Common myeloid progenitor, CD34-positive (primary cell): ENCODE measurements at regions of chr16 and their contacts with region 1.

Region 1: GRCh38 chr16:17177242-17177958 is 293.4 kb downstream of the XYLT1 start:
- DNase-seq: no peak
- H3K4me3 ChIP-seq: no peak overlapping the region
- H3K27ac ChIP-seq: no peak overlapping the region
- H3K4me1 ChIP-seq: peaks cover 4 to 19% (median 5%) of the 10 kb centered on the region in 4 experiments
- H3K27me3 ChIP-seq: no peaks in the 10 kb centered on the region

Region 2: DNA sequence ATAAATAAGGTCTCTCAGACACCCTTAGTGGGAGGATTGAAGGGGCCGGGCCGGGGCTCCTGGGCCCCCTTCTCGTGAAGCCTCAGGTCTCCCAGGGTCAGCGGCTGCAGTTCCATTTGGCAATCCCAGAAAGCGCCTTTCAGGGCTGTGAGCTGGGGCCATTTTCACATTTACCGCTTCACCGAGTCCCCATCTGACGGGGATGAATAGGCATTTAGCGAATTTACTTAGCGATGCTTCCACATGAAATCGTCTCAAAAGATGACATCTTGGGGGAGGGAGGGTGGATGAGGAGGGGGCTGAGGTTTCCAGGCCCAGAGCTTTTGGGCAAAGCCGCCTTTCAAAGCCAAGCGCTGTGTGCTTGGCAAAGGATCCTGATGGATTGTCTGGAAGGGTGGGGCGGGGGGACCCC is 16.4 kb before region 1 on chr16:
- CTCF ChIA-PET with region 1: no interaction called
- POLR2A ChIA-PET with region 1: no interaction called
- DNase-seq: no peak
- H3K4me3 ChIP-seq: no peak overlapping the region
- H3K27ac ChIP-seq: no peak overlapping the region
- H3K4me1 ChIP-seq: peaks cover 0 to 17% (median 2%) of the 10 kb centered on the region in 4 experiments
- H3K27me3 ChIP-seq: no peaks in the 10 kb centered on the region

Region 3: DNA sequence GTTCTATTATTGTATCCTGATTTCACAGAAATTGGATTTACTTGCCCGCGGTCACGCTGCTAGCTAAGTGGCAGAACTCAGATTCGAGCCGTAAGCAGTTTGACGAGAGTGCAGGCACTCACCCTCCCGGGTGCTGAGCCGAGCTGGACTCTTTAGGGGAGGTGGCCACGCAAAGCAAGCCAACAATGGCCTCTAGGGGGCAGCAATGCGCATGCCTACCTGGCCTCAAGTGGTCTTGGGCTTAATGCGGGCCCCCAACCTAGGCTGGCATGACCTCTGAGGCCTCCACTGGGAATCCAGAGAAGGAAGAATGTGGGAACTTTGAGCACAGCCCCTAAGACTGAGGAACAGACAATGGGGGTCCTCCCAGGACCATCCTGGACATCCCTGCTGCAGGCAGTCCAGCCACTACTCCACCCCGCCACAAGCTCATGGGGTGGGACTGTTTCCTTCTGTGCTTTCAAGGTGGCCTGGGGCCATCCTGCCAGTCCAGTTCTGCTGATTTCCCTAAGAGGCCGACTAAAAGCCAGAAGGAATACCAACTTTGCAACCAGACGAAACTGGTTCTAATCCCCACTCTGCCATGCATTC is 16.9 kb after region 1 on chr16:
- CTCF ChIA-PET with region 1: interaction called, 10 read pairs
- POLR2A ChIA-PET with region 1: no interaction called
- DNase-seq: peak; percentile 51 to 71 (median 65)
- H3K4me3 ChIP-seq: no peak overlapping the region
- H3K27ac ChIP-seq: no peak overlapping the region
- H3K4me1 ChIP-seq: no peaks in the 10 kb centered on the region
- H3K27me3 ChIP-seq: no peaks in the 10 kb centered on the region

Region 4: DNA sequence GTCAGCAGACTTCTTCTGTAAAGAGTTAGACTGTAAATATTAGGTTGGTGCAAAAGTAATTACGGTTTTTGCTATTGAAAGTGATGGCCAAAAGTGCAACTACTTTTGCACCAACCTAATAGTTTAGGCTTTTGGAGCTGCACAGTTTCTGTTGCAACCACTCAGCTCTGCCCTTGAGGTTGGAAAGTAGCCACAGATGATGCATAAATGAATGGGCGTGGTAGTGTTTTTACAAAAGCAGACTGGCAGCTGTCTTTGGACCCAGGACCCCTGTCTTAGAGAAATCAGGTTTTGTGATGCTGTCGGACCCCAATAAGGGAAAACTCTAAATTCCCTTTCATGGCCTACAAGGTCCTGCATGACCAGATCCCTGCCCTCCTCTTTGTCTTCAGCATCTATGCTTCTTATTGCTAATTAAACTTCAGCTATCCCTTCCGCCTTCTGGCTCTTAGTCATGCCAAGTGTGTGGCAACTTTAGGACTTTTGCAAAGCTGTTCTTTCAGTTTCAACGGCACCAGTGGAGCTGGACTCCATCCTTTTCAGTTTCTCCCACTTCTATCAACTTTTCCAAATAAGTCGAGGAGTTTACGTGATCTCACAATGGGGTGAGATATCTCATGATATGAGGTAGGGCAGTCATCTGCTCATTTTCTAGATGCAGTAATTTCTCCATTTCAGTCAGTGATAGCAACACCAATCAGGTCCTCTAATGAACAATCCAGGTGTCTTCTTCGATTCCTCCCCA is 61.1 kb after region 1 on chr16:
- CTCF ChIA-PET with region 1: no interaction called
- POLR2A ChIA-PET with region 1: no interaction called
- DNase-seq: peak in 1 of 3 donors; percentile 31
- H3K4me3 ChIP-seq: no peak overlapping the region
- H3K27ac ChIP-seq: no peak overlapping the region
- H3K4me1 ChIP-seq: peaks cover 0 to 29% (median 21%) of the 10 kb centered on the region in 4 experiments
- H3K27me3 ChIP-seq: no peaks in the 10 kb centered on the region

Region 5: GRCh38 chr16:17369421-17370222 is 192.2 kb after region 1 on chr16:
- CTCF ChIA-PET with region 1: no interaction called
- POLR2A ChIA-PET with region 1: no interaction called
- DNase-seq: peak in 2 of 3 donors; percentile 78 to 86
- H3K4me3 ChIP-seq: peak overlapping the region in 5 of 7 experiments; percentile 9 to 48 (median 23)
- H3K27ac ChIP-seq: peak overlapping the region; percentile 48 to 73
- H3K4me1 ChIP-seq: peaks cover 33 to 90% (median 78%) of the 10 kb centered on the region in 4 experiments
- H3K27me3 ChIP-seq: no peaks in the 10 kb centered on the region